ENCODE measurements at regions of chr2 and their contacts with region 1.

Region 1: DNA sequence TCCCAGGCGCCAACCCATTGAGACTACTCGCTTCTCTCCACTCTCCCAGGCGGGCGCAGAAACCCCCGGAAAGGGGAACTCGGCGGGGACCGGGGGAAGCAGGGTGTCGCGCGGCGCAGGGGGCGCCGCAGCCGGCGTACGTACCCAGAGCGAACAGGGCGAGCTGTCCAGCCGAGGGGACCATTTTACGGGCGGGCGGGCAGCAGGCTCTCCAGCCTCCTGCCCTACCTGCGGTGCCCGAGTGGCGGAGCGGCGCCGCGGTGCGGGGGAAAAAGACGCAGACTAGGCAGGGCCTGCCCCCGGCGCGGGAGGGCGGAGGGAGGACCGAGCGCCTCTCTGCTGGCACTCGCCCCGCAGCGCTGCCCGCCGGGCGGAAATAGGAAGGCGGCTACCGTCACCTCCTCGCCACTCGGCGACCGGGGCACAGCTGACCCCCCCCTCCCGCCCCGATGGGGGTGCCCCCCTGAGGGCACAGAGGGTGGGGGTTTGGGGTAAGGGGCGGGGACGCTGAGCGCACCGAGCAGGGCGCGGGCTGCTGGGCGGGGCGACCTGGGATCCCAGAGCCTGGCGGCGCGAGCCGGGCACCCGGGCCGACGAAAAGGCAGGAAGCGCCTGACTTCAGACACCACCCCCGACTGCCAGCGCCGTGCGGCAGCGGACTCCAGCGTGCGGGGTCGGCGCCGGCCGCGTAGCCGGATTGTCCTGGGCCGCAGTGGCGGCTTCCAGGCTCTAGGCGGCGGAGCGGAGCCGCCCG is at the start of gene TGFA:
- DNase-seq: peak; percentile 91
- ATAC-seq: peak; percentile 84
- H3K4me3 ChIP-seq: peak within 1 kb of the TSS; percentile 70 to 91 (median 75)
- H3K27ac ChIP-seq: peak within 1 kb of the TSS; percentile 76
- H3K4me1 ChIP-seq: peaks cover 58% of the 10 kb centered on the region
- H3K27me3 ChIP-seq: no peaks in the 10 kb centered on the region; a peak in 1 of 5 replicates
- CTCF ChIP-seq: peak; percentile 90
- EP300 ChIP-seq: no peak
- POLR2A ChIP-seq: peak; percentile 74 to 75
- RAD21 ChIP-seq: peak; percentile 96
- total RNA-seq, gene TGFA: 12.5 and 15.3 TPM in 2 replicates

Region 2: GRCh38 chr2:70340921-70341765 is 212.6 kb before region 1 on chr2:
- CTCF ChIA-PET with region 1: interaction called, 5 read pairs
- POLR2A ChIA-PET with region 1: no interaction called
- in situ Hi-C with region 1: no loop called
- intact Hi-C with region 1: loop called (anchors 1 kb)
- DNase-seq: peak; percentile 62
- ATAC-seq: peak; percentile 88
- H3K4me3 ChIP-seq: no peak overlapping the region
- H3K27ac ChIP-seq: no peak overlapping the region
- H3K4me1 ChIP-seq: no peaks in the 10 kb centered on the region
- H3K27me3 ChIP-seq: peaks cover 0 to 25% of the 10 kb centered on the region in 2 experiments; a peak in 1 of 5 replicates
- CTCF ChIP-seq: peak; percentile 98
- EP300 ChIP-seq: no peak
- POLR2A ChIP-seq: no peak
- RAD21 ChIP-seq: peak; percentile 92

Region 3: GRCh38 chr2:70489165-70489564 is 64.6 kb before region 1 on chr2:
- CTCF ChIA-PET with region 1: no interaction called
- POLR2A ChIA-PET with region 1: no interaction called
- in situ Hi-C with region 1: no loop called
- intact Hi-C with region 1: loop called (anchors 5 kb)
- DNase-seq: no peak
- ATAC-seq: no peak
- H3K4me3 ChIP-seq: no peak overlapping the region
- H3K27ac ChIP-seq: no peak overlapping the region
- H3K4me1 ChIP-seq: peaks cover 10% of the 10 kb centered on the region
- H3K27me3 ChIP-seq: no peaks in the 10 kb centered on the region
- CTCF ChIP-seq: no peak
- EP300 ChIP-seq: no peak
- POLR2A ChIP-seq: no peak
- RAD21 ChIP-seq: no peak

Region 4: DNA sequence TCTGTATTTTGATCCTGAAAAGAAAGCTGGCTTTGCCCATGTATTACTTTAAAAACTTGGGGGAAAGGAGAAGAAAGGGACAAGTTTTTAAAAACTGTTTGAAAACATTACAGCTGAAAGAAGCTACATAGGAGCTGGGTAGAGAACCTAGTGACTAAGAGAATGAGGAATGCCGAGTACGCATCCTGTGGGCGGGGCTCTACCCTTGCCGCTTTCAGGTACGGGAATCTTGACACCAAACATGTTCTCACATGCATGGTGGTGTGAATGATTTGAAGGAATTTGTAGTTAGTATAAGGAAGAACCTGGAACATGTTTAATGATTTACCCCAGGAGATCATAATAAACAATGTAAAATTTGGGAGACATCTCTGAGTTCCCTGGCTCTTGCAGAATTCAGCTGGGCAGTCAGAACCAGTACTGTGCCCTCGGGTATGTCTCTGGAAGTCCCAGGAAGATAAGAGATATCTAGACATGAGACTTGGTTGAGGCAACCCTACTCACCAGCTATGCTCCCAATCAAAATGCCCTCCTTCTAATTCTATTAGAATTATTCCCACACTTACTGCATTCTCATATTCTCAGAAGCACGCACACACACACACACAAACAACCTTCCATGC is 16.4 kb after region 1 on chr2:
- CTCF ChIA-PET with region 1: no interaction called
- POLR2A ChIA-PET with region 1: interaction called, 20 read pairs
- in situ Hi-C with region 1: no loop called
- intact Hi-C with region 1: loop called (anchors 1 kb)
- DNase-seq: peak; percentile 65
- ATAC-seq: peak; percentile 48
- H3K4me3 ChIP-seq: no peak overlapping the region
- H3K27ac ChIP-seq: no peak overlapping the region
- H3K4me1 ChIP-seq: peaks cover 53% of the 10 kb centered on the region
- H3K27me3 ChIP-seq: 0 out of 5 replicates have a peak, but pooled peaks cover 0 to 4% of the 10 kb centered on the region in 2 experiments
- CTCF ChIP-seq: no peak
- EP300 ChIP-seq: no peak
- POLR2A ChIP-seq: no peak
- RAD21 ChIP-seq: no peak

Region 5: DNA sequence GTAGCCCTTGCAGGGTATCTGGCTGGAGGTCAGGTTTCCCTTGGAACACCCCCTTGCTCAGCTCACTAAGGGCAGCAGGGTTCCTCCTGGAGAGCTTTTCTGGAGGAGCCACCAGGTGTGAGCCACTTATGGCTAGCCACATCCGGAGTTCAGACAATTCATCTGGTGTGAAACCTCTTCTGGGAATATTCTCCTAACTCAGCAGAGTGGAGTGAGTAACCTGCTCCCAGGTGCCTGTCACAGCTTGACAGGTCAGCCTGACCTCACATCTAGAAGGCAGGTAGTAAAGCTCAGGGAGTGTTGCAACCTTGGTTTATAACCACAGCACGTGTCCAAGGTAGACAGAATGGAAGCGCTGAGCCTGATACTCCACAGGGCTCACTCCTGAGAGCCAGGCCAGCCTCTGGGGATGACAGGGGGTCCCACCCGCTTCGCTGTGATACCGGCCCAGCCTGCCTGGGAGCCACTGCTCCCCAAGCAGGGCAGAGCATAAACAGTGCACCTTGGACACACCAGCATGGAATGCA is 62.5 kb after region 1 on chr2:
- CTCF ChIA-PET with region 1: interaction called, 29 read pairs
- POLR2A ChIA-PET with region 1: interaction called, 5 read pairs
- in situ Hi-C with region 1: loop called (anchors 5 kb)
- intact Hi-C with region 1: loop called (anchors 1 kb)
- DNase-seq: no peak
- ATAC-seq: no peak; the same call in 2 of the 3 replicates
- H3K4me3 ChIP-seq: no peak overlapping the region
- H3K27ac ChIP-seq: no peak overlapping the region
- H3K4me1 ChIP-seq: no peaks in the 10 kb centered on the region
- H3K27me3 ChIP-seq: peaks cover 0 to 37% of the 10 kb centered on the region in 2 experiments; a peak in 3 of 5 replicates
- CTCF ChIP-seq: no peak
- EP300 ChIP-seq: no peak
- POLR2A ChIP-seq: no peak
- RAD21 ChIP-seq: no peak

Region 6: DNA sequence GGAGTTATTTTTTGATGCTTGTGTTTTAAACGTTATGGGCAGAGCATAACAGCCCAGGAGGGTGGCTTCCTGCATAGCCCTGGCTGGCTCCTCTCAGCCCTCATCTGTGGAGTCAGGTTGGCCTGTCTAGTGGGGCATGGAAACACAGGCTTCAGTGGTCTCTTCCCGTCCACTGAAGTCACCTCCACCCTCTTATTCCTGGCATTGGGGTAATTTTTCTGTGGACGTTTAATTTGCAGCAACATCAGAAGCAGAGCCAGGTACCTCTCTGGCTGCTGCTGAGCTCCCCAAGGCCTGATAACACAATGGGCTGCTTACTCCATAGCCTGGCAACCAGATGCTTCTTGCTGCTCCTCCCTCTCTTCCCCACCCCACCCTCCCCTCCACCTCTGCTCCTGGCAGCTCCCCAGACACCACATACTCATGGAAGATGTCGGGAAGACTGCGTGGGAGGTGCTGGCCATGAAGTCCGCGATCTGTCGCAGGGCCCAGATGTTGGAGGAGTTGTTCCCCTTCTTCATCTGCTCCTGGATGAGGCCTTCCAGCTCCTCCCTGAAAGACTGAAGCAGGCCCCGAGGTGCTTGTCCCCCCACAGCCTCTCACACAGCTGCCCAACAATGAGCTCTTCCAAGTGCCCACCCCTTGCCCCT is 150.3 kb after region 1 on chr2:
- CTCF ChIA-PET with region 1: no interaction called
- POLR2A ChIA-PET with region 1: no interaction called
- in situ Hi-C with region 1: no loop called
- intact Hi-C with region 1: no loop called
- DNase-seq: no peak
- ATAC-seq: no peak
- H3K4me3 ChIP-seq: no peak overlapping the region
- H3K27ac ChIP-seq: no peak overlapping the region
- H3K4me1 ChIP-seq: peaks cover 7% of the 10 kb centered on the region; the same call in 1 of the 2 replicates
- H3K27me3 ChIP-seq: peaks cover 7 to 11% of the 10 kb centered on the region in 2 experiments; a peak in 3 of 5 replicates
- CTCF ChIP-seq: no peak
- EP300 ChIP-seq: no peak
- POLR2A ChIP-seq: no peak
- RAD21 ChIP-seq: no peak

Region 7: DNA sequence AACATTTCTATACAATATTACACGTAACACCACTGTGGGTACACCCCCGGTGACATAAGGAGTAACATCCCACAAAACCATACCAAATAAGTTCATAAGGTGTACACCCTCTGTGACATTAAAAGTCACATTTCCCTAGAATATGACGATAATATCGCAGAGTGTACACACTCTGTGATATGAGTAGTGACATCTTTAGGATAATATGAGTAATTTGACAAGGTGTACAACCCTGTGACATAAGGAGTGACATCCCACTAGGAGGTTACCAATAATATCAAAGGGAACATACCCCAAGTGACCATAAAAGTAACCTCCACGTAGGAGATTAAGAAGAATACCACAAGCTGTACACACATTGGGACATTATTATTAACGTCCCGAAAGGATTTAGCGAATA is 464.9 kb after region 1 on chr2:
- CTCF ChIA-PET with region 1: no interaction called
- POLR2A ChIA-PET with region 1: no interaction called
- in situ Hi-C with region 1: no loop called
- intact Hi-C with region 1: no loop called
- DNase-seq: no peak
- ATAC-seq: no peak
- H3K4me3 ChIP-seq: no peak overlapping the region
- H3K27ac ChIP-seq: no peak overlapping the region
- H3K4me1 ChIP-seq: peaks cover 16% of the 10 kb centered on the region
- H3K27me3 ChIP-seq: 0 out of 5 replicates have a peak, but pooled peaks cover 0 to 4% of the 10 kb centered on the region in 2 experiments
- CTCF ChIP-seq: no peak
- EP300 ChIP-seq: no peak
- POLR2A ChIP-seq: no peak
- RAD21 ChIP-seq: no peak

Measured in HepG2 (cell line).